Heart left ventricle (tissue), 16 donors: ENCODE measurements at regions of chr17 and their contacts with region 1.

Region 1: DNA sequence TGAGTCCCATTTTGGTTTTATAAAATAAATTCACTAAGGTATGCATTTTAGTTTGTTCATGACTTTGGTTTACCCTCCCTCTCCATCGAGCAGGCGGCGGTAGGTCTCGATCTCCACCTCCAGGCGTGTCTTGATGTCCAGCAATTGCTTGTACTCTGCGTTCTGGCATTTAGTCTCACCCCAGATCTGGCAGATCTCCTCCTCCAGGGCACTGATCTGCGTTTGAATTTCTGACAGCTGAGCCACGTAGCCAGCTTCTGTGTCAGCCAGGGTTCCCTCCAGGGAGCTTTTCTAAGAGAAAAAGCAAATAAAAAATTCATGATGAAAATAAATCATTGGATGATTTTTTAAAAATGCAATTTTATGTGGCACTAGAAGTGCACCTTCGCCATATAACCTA is 4.2 kb downstream of the KRT24 start:
- DNase-seq: no peak
- ATAC-seq: no peak
- H3K4me3 ChIP-seq: no peak overlapping the region
- H3K27ac ChIP-seq: no peak overlapping the region
- H3K4me1 ChIP-seq: no peaks in the 10 kb centered on the region
- H3K27me3 ChIP-seq: peaks cover 0 to 54% (median 9%) of the 10 kb centered on the region in 9 donors
- CTCF ChIP-seq: no peak
- POLR2A ChIP-seq: no peak

Region 2: DNA sequence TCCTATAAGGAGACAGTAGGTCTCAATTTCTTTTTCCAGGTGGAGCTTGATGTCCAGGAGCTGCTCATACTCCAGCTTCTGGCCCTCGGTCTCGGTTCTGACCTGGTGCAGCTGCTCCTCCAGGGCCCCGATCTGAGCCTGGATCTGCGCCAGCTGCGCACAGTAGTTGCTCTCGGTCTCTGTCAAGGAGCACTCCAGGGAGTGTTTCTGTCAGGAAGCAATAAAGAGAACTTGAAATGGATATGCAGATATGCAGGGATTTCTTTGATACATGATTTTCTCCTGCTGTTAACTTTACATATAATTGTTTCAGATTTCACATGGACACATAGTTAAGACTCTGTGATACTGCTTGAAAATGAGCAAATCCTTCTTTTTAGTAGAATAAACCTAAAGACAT is 51.0 kb after region 1 on chr17:
- intact Hi-C with region 1: loop called in 1 of 10 experiments (anchors 10 kb)
- DNase-seq: no peak
- ATAC-seq: no peak
- H3K4me3 ChIP-seq: no peak overlapping the region
- H3K27ac ChIP-seq: no peak overlapping the region
- H3K4me1 ChIP-seq: no peaks in the 10 kb centered on the region
- H3K27me3 ChIP-seq: peaks cover 0 to 25% (median 3%) of the 10 kb centered on the region in 9 donors
- CTCF ChIP-seq: no peak
- POLR2A ChIP-seq: no peak